Activated CD4-positive, alpha-beta T cell treated with anti-CD3 and anti-CD28 coated beads, Interleukin-2, amount 10 ng/mL, durations not matched to agents 24 days and 14 days (primary cell): ENCODE measurements at regions of chr2 and their contacts with region 1.

Region 1: DNA sequence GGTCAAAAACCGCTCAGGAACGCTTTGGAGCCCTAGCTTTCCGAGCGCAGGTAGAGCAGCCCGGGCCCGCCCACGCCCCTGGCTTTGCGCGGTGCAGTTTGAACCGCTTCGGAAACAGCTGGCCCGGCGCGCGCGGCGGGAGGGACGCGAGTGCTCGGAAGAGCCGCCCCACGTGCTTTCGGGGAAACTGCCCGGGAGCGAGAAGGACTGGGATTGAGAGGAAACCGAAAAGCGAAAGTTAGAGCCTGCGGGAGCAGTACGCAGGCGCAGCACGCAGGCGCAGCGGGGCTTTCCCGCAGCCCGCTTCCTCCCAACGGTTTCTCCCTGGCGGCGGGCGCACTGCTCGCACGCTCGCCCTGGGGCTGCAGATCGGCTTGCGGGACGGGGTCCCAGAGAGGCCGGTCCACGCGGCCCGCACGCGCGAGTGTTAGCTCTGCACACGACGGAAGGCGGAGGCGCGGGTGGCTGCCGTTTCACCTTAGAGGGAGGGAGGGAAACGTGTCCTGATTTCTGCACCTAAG is 6.3 kb upstream of the STAT1 start:
- DNase-seq: peak; percentile 99
- H3K4me3 Mint-ChIP-seq: no peak overlapping the region
- H3K27ac Mint-ChIP-seq: no peak overlapping the region
- H3K4me1 Mint-ChIP-seq: peaks cover 31% of the 10 kb centered on the region
- H3K27me3 Mint-ChIP-seq: peaks cover 2% of the 10 kb centered on the region

Region 2: DNA sequence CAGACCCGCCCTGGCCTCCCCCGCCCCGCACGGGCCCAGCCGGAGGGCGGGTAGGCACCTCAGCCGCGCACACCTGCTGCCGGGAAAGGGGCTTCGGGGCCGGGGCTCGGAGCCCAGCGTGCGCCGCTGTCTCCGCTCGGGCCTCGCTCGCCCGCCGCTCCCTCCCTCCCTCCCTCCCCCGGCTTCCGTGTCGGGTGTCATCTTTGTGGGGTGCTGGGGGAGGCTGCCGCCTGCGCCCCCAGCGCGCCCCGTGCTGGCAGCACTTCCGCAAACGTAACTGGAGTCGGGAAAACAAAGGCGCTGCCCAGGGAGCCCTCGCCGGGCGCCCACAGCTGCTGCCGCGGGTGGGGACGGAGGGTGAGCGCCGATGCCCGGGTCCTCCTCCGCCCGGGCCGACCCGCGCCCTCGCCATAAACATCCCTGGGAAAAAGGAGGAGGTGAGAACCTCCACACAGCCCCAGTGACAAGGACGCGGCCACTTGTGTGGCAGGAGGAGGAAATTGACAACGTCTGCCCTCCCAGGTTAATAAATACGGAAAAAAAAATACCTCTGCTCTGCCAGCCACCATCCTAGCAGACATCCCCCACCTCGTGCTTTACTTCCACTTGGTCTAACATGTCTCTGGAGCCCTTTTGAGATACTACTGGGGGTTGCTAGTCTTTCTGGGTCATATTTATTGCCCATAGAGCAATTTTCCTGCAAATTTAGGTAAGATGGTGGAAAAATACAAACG is 611.6 kb before region 1 on chr2:
- intact Hi-C with region 1: loop called (anchors 5 kb)
- DNase-seq: peak; percentile 91
- H3K4me3 Mint-ChIP-seq: peak overlapping the region; percentile 87
- H3K27ac Mint-ChIP-seq: peak overlapping the region; percentile 94
- H3K4me1 Mint-ChIP-seq: peaks cover 41% of the 10 kb centered on the region
- H3K27me3 Mint-ChIP-seq: no peaks in the 10 kb centered on the region

Region 3: DNA sequence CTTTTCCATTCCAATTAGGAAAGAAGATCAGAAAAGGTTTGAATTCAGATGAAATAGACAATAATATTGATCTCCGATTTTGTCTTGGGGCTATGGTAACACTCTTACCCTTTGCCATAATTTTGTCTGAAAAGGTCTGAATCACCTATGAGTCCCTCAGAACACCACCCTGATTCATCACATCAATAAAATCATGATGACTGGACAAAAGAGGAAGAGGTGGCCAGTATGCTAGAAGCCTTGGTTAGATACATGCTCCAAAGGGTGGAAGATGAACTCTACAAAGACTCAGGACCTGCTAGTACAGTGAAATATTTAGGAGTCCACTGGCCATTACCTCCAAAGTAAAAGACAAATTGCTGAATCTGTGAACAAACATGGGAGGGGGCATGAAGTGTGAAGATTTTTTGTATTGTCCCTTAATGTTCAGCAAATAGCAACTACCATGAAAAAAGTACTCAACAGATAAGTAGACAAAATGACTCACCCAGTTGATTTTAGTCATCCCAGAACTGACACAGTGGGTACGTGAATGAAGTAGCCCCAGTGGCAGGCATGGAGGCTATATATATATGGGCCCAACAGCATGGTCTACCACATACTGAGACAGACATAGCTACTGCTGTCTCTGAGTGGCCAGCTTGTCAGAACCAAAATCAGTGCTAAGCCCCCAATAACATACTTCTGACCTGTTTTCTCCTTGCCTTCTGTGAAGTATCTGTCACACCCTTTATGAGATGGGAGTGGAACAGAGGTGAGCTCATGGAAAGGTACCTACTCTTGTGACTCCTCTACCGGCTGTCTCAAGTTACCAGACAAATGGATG is 176.2 kb before region 1 on chr2:
- intact Hi-C with region 1: loop called (anchors 2 kb)
- DNase-seq: peak; percentile 72
- H3K4me3 Mint-ChIP-seq: peak overlapping the region; percentile 60
- H3K27ac Mint-ChIP-seq: peak overlapping the region; percentile 87
- H3K4me1 Mint-ChIP-seq: peaks cover 25% of the 10 kb centered on the region
- H3K27me3 Mint-ChIP-seq: no peaks in the 10 kb centered on the region

Region 4: GRCh38 chr2:191038241-191038725 is 18.0 kb after region 1 on chr2:
- intact Hi-C with region 1: loop called (anchors 1 kb)
- DNase-seq: peak; percentile 85
- H3K4me3 Mint-ChIP-seq: peak overlapping the region; percentile 47
- H3K27ac Mint-ChIP-seq: peak overlapping the region; percentile 75
- H3K4me1 Mint-ChIP-seq: peaks cover 41% of the 10 kb centered on the region
- H3K27me3 Mint-ChIP-seq: no peaks in the 10 kb centered on the region

Region 5: GRCh38 chr2:191051825-191052778 is 31.8 kb after region 1 on chr2:
- intact Hi-C with region 1: no loop called
- DNase-seq: peak; percentile 80
- H3K4me3 Mint-ChIP-seq: no peak overlapping the region
- H3K27ac Mint-ChIP-seq: no peak overlapping the region
- H3K4me1 Mint-ChIP-seq: peaks cover 22% of the 10 kb centered on the region
- H3K27me3 Mint-ChIP-seq: no peaks in the 10 kb centered on the region

Region 6: GRCh38 chr2:191114403-191114886 is 94.2 kb after region 1 on chr2:
- intact Hi-C with region 1: loop called (anchors 1 kb)
- DNase-seq: peak; percentile 82
- H3K4me3 Mint-ChIP-seq: peak overlapping the region; percentile 60
- H3K27ac Mint-ChIP-seq: peak overlapping the region; percentile 92
- H3K4me1 Mint-ChIP-seq: peaks cover 55% of the 10 kb centered on the region
- H3K27me3 Mint-ChIP-seq: no peaks in the 10 kb centered on the region